ENCODE measurements at regions of chr3 and their contacts with region 1.

Region 1: DNA sequence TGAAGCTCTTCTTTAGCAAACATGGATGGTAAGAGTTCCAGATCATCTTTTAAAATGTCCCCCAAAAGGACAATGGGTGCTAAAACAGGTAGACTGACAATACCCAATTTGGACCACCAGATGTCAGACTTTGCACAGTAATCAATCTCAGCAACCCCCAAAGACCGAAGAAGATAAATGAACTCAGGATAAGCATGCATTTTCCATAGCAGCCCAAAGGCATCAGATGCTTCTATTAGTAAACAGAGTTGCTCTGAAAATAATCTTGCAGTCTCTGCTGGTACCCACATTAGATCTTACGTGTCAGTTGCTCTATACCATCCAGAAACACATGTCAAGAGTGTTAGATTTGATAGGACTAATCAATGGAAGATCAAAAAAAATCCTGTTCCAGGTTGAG is 20.6 kb downstream of the MYH15 start:
- DNase-seq: peak; percentile 51
- ATAC-seq: peak; percentile 48
- H3K4me3 ChIP-seq: no peak overlapping the region
- H3K27ac ChIP-seq: no peak overlapping the region
- H3K4me1 ChIP-seq: peaks cover 4% of the 10 kb centered on the region
- H3K27me3 ChIP-seq: no peaks in the 10 kb centered on the region
- CTCF ChIP-seq: peak; percentile 70
- POLR2A ChIP-seq: no peak
- RAD21 ChIP-seq: peak; percentile 84

Region 2: DNA sequence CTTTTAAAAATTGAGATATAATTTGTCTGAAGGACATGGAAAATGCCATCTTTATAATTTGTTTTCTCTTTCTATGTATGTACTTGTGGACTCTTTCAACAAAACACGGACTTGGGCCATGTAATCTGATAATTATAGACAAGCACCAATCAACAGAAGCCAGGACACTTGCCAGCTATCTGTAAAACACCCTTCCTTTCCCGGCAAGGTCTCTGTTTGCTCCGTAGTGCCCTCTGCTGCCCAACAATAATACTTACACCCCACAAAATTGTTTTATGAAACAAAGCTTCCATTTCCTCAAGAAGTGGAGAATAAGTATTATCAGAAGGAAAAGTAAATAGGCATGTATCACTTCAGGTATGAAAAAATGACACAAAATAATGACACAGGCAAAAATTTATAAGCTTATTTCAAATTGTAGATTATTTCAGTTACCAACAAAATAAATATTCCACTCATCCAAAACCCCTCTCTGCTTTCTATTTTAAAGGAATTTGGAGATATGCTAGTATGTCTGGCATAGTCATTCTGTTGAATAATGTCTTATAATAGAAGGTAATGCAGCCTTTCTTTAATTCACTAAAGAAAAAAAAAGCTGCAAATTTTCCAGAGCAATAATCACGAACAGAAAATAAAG is 12.1 kb before region 1 on chr3:
- CTCF ChIA-PET with region 1: interaction called, 12 read pairs
- POLR2A ChIA-PET with region 1: no interaction called
- dilution Hi-C with region 1: no loop called
- in situ Hi-C with region 1: no loop called
- intact Hi-C with region 1: no loop called
- DNase-seq: peak; percentile 72
- ATAC-seq: peak; percentile 76
- H3K4me3 ChIP-seq: no peak overlapping the region
- H3K27ac ChIP-seq: no peak overlapping the region
- H3K4me1 ChIP-seq: 0 out of 2 replicates have a peak, but pooled peaks cover 2% of the 10 kb centered on the region
- H3K27me3 ChIP-seq: no peaks in the 10 kb centered on the region
- CTCF ChIP-seq: peak; percentile 73
- POLR2A ChIP-seq: no peak
- RAD21 ChIP-seq: peak; percentile 83

Region 3: DNA sequence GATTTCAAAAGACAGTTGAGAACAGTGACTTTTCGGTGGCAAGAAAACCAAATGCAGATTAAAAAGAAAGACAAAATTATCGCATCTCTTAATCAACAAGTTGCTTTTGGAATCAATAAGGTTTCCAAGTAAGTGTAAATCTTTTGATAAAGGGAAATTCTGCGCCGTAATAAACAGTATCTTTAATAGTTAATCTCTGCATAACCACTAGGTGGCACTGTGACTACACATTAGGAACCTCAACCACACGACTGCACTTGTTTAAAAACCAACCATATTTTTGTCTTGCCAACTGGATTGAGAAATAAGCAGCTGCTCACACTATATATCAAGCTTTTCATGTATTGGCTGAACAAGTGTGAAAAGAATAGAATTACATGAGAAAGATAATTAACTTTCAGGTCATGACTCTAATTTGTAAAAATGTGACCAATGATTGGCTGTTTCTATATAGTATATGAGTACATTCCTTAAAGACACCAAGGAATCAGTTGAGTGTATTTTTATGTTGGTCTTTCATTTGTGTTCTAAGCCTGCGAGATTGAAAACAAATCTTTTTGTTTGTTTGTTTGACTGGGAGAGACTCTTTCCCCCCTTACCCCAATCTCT is 172.5 kb after region 1 on chr3:
- CTCF ChIA-PET with region 1: no interaction called
- POLR2A ChIA-PET with region 1: no interaction called
- dilution Hi-C with region 1: no loop called
- in situ Hi-C with region 1: no loop called
- intact Hi-C with region 1: loop called (anchors 1 kb)
- DNase-seq: peak; percentile 83
- ATAC-seq: peak; percentile 88
- H3K4me3 ChIP-seq: no peak overlapping the region
- H3K27ac ChIP-seq: no peak overlapping the region
- H3K4me1 ChIP-seq: no peaks in the 10 kb centered on the region
- H3K27me3 ChIP-seq: no peaks in the 10 kb centered on the region
- CTCF ChIP-seq: peak; percentile 85
- POLR2A ChIP-seq: no peak
- RAD21 ChIP-seq: peak; percentile 79

Region 4: DNA sequence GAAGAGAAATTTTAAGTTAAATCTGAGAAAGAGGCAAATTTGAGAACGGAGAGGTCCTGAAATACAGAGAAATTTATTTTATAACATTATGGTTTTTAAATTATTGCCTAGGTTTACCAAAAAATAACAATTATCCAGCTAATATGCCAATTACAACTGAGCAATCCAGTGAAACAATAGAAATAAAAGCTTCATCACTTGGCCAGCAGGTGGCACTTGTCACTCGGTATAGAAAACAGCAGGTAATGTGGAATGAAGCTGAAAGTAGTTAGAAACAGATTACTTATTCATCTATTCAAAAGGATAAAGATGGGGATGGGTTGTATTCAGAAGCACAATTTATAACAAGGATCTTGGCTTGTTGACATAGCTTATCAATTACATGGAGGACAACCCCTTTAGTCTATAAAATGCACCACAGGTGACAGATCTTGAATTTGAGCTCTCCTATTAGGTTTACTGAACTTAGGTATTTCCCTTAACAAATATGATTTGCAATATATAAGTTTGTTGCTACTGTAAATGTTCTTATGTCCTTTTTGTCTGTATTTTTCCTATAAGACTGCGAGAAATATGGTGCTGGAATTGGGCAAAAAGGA is 534.0 kb after region 1 on chr3:
- CTCF ChIA-PET with region 1: no interaction called
- POLR2A ChIA-PET with region 1: no interaction called
- dilution Hi-C with region 1: no loop called
- in situ Hi-C with region 1: no loop called
- intact Hi-C with region 1: loop called (anchors 5 kb)
- DNase-seq: peak; percentile 47
- ATAC-seq: peak; percentile 63; the same call in 1 of the 2 replicates
- H3K4me3 ChIP-seq: no peak overlapping the region
- H3K27ac ChIP-seq: no peak overlapping the region
- H3K4me1 ChIP-seq: no peaks in the 10 kb centered on the region
- H3K27me3 ChIP-seq: no peaks in the 10 kb centered on the region
- CTCF ChIP-seq: peak; percentile 62
- POLR2A ChIP-seq: no peak
- RAD21 ChIP-seq: peak; percentile 49